Posterior cingulate gyrus (tissue), 11 donors: ENCODE measurements at regions of chr6 and their contacts with region 1.

Region 1: DNA sequence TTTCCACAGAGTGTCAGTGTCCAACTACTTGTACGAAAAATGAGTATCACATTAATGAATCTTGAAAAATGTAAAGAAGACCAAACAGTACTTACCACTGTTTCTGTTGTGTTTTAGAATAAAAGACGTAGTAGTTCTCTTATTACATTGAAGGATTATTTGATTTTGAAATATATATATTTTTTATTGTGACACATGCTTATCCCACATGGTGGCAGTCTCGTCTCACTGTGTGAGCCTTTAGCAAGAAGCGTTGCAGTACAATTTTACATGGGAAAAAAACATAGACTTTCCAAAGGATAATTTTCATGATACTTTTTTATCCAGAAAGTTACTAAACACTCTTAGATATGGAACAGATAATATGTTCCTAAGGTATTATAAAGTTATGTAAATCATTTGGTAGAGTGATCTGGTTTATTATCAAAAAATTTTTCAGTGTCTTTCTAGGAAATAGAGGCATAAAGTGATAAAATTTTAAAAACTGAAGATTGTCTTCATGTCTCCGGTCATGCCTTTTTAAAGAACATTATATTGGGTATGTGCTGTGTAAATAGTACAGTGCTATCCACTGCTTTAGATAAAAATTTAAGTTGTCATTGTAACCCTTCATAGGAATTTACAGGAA is 117.5 kb upstream of the SAMD5 start:
- DNase-seq: peak in 1 of 10 donors; percentile 16

Region 2: DNA sequence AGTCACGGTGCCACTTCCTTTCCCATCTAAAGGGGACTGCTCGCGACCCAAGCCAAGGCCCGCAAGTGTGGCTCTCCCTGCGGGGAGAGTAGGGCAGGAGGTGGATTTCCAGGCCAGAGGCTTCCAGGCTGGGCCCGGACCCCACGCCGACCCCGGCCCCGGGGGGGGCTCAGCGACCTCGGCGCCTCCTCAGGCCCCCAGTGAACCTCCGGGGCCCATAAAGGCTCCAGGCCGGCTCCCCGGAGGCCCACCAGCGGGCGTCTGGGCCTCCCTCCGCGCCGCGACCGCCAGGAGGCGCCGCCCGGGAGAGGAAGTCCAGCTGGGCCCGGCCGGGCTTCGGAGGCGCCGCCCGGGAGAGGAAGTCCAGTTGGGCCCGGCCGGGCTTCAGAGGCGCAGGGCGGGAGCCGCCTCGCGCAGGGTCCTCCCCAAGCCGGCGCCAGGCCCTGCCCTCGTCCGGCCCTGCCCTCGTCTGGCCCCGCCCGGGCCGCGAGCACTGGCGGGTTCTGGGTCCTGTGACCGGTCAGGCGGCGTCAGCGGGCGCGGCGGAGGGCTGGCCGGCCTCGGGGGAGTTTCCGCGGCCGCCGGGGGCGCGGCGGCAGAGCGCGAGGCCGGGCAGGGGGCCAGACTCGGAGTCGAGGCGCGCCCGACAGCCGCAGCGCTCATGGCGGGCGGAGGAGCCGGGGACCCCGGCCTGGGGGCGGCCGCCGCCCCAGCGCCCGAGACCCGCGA is 847.6 kb before region 1 on chr6 and contains the start of gene RAB32:
- intact Hi-C with region 1: no loop called
- DNase-seq: peak; percentile 67 to 97 (median 81)

Region 3: DNA sequence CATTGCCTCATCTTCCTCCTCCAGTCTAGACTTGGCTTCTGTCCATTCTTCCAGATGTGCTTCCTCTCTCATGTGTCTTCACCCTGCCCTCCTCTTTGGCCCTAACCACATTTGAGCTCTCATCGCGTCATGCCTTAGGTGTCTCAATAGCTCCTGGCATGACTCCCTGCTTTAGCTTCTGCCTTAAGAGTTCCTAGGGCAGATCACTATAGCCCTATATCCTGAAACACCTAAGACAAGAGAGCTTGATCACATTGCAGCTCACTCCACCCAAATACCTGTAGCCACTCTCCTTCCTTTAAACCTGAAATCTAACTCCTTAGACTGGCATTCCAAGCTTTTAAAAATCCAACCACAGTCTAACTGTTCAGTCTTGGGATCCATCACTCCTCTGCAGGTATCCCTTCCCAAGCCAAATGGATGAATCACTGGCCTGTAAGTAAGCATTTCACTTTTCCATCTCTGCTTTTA is 255.8 kb before region 1 on chr6:
- intact Hi-C with region 1: no loop called
- DNase-seq: no peak

Region 4: DNA sequence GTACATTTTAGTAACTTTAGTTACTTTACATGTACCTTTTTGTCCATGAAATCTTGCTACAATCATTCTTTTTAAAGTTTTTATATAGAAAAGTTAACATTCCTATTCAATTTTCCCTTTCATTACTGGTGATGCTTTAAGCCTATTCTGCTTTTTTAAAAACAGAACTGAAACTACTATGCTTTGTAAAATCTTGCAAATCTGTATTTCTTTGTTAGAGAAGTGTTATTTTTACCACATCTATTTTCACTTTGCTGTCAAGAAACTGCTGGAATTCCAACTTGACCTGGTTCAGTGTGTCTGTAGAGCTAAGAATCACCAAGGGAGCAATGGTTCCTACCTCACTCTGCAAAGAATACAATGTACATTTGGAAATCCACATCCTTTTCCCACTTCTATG is 95.7 kb after region 1 on chr6:
- intact Hi-C with region 1: no loop called
- DNase-seq: no peak

Region 5: GRCh38 chr6:148166339-148166968 is 775.4 kb after region 1 on chr6:
- intact Hi-C with region 1: loop called (anchors 10 kb)
- DNase-seq: no peak